ENCODE measurements at regions of chr12 and their contacts with region 1.

Region 1: GRCh38 chr12:52884526-52885293 is 20.2 kb downstream of the KRT8 start:
- DNase-seq: peak; percentile 86
- H3K4me3 ChIP-seq: no peak overlapping the region; a peak in 1 of 4 replicates
- H3K27ac ChIP-seq: no peak overlapping the region
- H3K4me1 ChIP-seq: no peaks in the 10 kb centered on the region; a peak in 1 of 4 replicates
- H3K27me3 ChIP-seq: no peaks in the 10 kb centered on the region
- CTCF ChIP-seq: peak; percentile 98
- EP300 ChIP-seq: no peak
- RAD21 ChIP-seq: peak; percentile 93

Region 2: DNA sequence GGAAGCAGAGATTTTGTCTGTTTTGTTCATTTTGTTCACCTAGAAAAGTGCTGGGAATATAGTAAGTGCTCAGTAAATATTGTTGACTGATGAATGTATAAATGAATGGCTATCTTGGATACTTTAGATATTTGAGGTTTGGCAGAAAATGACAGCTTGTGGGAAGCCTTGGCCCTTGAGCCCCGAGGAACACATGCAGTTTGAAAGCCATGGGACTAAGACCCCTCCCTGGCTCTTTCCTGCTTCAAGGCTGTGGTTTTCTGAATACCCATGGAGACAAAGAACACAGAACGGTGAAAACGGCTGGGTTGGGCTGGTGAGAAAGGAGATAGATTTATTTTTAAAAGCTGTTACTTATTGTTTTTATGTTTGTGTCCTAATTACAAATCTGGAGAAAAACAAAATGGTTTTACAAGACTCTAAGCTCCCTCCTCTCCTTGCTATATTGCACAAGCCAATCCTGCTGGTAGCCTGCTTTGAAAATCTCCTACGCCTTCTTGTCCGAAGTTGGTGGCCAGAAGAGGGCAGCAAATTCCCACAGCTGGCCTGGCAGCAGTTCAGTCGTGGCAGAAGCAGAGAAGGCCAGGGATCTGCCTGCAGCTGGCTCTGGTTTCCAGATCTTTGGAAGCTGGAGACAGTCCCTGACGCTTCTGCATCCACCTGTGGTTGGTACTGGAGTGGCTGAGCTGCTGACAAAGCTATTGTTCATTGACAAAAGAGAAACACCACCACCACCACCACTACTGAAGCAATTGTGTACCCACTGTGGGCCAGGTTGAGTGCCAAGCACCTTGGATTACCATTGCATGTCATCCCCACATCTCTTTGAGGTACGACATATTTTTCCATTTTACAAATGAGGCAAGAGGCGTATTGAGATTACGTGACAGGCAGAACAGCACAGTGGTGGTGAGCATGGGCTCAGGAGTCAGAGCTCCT is 512.2 kb before region 1 on chr12:
- CTCF ChIA-PET with region 1: interaction called, 111 read pairs
- POLR2A ChIA-PET with region 1: no interaction called
- DNase-seq: peak; percentile 87
- H3K4me3 ChIP-seq: peak overlapping the region in 1 of 2 experiments; percentile 43; a peak in 1 of 4 replicates
- H3K27ac ChIP-seq: no peak overlapping the region
- H3K4me1 ChIP-seq: no peaks in the 10 kb centered on the region
- H3K27me3 ChIP-seq: peaks cover 48% of the 10 kb centered on the region
- CTCF ChIP-seq: peak; percentile 81
- EP300 ChIP-seq: no peak
- RAD21 ChIP-seq: peak; percentile 94

Region 3: GRCh38 chr12:52582971-52583456 is 301.7 kb before region 1 on chr12:
- CTCF ChIA-PET with region 1: interaction called, 76 read pairs
- POLR2A ChIA-PET with region 1: no interaction called
- DNase-seq: peak; percentile 76
- H3K4me3 ChIP-seq: peak overlapping the region in 1 of 2 experiments; percentile 25; a peak in 1 of 4 replicates
- H3K27ac ChIP-seq: no peak overlapping the region
- H3K4me1 ChIP-seq: no peaks in the 10 kb centered on the region
- H3K27me3 ChIP-seq: peaks cover 44% of the 10 kb centered on the region
- CTCF ChIP-seq: peak; percentile 67
- EP300 ChIP-seq: no peak
- RAD21 ChIP-seq: peak; percentile 77

Region 4: GRCh38 chr12:52895061-52895887 is 10.6 kb after region 1 on chr12:
- CTCF ChIA-PET with region 1: interaction called, 91 read pairs
- POLR2A ChIA-PET with region 1: no interaction called
- DNase-seq: no peak
- H3K4me3 ChIP-seq: no peak overlapping the region
- H3K27ac ChIP-seq: no peak overlapping the region
- H3K4me1 ChIP-seq: peaks cover 0 to 5% of the 10 kb centered on the region in 2 experiments; a peak in 1 of 4 replicates
- H3K27me3 ChIP-seq: no peaks in the 10 kb centered on the region
- CTCF ChIP-seq: no peak
- EP300 ChIP-seq: no peak
- RAD21 ChIP-seq: no peak

Region 5: DNA sequence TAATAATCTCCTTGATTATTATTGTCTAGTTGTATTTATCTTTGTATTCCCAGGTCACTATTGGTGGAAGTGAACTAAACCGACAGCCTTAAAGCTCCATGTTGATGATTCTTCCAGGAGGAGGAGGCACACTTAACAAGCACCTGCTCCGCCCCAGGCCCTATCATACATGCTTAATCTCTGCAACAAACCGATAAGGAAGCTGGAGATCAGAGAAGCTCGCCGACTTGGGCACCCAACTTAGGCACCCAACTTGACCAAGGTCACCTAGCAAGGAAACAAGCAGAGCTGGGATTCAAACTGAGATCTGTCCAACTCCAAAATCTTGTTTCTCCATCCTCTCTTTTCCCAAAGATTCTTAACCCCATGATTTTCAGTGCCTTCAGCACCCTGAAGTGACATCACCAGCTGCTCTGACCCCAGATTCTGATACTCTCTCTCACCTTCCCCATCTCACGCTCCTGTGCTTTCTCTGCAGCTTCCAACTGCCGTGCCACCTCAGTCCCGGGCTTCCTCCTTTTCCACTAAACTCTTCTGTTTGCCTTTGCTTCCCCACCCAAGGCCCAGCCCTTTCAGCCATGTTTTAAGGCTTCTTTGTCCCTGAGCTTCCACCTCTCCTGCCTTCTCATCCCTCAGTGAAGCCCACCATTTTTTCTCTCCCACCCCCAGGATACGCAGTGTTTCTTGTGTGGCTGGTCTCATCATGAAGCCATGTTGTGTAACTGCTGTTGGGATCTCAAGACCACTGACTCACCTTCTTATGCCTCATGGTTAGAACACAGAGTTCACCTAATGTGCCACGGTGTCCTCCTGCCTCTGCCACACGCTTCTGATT is 57.6 kb after region 1 on chr12:
- CTCF ChIA-PET with region 1: interaction called, 10 read pairs
- POLR2A ChIA-PET with region 1: no interaction called
- DNase-seq: no peak
- H3K4me3 ChIP-seq: no peak overlapping the region
- H3K27ac ChIP-seq: no peak overlapping the region
- H3K4me1 ChIP-seq: peaks cover 0 to 34% of the 10 kb centered on the region in 2 experiments; a peak in 2 of 4 replicates
- H3K27me3 ChIP-seq: no peaks in the 10 kb centered on the region
- CTCF ChIP-seq: no peak
- EP300 ChIP-seq: no peak
- RAD21 ChIP-seq: no peak

Region 6: DNA sequence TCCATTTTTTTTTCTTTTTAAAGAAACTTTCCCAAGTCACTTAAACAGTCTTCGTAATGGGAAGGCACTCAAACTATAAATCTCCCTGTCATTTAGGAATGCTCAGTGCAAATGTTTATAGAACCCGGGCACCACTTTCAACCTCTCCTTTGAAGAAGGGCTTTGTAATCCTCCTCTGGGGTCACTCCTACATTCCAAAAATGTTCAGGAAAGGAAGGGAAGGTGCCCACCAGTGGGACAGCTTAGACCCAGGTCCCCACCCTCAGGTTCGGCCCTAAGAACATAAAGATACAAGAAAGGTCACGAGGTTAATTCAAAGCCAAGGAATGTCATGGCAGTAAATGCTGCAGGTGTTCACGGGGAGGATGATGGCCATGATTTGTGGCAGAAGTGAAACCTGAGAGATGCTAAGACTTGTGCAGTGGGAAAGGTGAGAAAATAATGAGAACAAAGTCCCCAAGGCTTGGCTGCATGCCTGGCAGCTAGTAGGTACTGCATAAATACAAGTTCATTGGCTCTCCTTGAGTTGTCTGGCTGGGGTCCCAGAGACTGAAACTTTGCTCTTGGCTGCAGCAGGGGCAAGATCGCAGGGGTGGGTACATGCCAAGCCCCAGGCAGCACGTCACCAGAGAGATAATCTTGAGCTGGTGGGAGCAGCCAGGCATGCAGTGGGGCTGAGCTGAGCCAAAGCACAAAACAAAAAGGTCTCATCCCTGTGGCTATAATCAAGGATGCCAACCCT is 85.3 kb after region 1 on chr12:
- CTCF ChIA-PET with region 1: interaction called, 21 read pairs
- POLR2A ChIA-PET with region 1: no interaction called
- DNase-seq: no peak
- H3K4me3 ChIP-seq: no peak overlapping the region
- H3K27ac ChIP-seq: no peak overlapping the region
- H3K4me1 ChIP-seq: peaks cover 0 to 12% of the 10 kb centered on the region in 2 experiments; a peak in 2 of 4 replicates
- H3K27me3 ChIP-seq: no peaks in the 10 kb centered on the region
- CTCF ChIP-seq: no peak
- EP300 ChIP-seq: no peak
- RAD21 ChIP-seq: no peak

Region 7: DNA sequence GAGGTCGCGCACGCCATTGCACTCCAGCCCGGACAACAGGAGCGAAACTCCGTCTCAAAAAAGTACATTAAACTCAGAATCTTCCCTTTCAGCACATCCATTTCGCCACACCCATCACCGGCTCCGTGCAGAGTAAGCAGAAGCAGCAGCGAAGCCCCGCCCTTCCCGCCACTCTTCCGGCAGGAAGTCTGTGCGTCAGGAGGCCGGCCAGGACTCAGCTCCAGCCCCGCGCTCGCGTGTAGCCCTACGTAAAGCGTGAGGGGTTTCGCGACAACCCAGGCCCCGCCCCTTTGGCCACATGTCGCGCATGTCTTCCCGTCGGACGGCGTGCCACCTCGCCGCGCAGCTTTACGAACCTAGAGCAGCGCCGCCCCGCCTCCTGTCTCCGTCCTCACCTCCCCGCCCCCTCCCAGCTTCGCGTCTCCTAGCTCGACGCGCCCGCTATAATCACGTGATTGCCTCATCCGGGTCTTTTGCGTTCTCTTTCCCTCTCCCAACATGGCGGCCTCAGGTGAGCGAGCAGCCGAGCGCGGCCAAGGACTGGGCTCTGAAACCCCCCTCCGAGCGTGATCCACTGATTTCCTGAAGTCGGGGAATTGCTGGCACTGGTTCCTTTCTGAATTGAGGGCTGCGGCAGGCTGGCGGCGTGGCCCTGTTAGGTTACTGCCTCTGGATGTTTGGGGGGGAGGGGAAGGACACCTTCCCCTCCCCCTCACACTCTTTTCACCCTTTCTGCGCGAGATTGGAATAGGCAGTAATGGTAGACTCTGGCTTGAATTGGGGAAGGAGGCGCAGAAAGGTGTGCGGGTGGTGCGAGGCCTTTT is 121.5 kb after region 1 on chr12 and contains the start of gene EIF4B:
- CTCF ChIA-PET with region 1: interaction called, 11 read pairs
- POLR2A ChIA-PET with region 1: no interaction called
- DNase-seq: peak; percentile 95
- H3K4me3 ChIP-seq: peak within 1 kb of the TSS; percentile 62 to 97
- H3K27ac ChIP-seq: peak within 1 kb of the TSS; percentile 90 to 92
- H3K4me1 ChIP-seq: peaks cover 14 to 19% of the 10 kb centered on the region in 2 experiments; a peak in 3 of 4 replicates
- H3K27me3 ChIP-seq: no peaks in the 10 kb centered on the region
- CTCF ChIP-seq: no peak
- EP300 ChIP-seq: no peak
- RAD21 ChIP-seq: no peak
- polyA plus RNA-seq, gene EIF4B: 267 and 292 TPM in 2 replicates

Measured in SK-N-SH (cell line).